Activated CD4-positive, alpha-beta memory T cell treated with anti-CD3 and anti-CD28 coated beads for 36 hours (primary cell): ENCODE measurements at regions of chr5 and their contacts with region 1.

Region 1: GRCh38 chr5:80654391-80655230 is at the starts of genes DHFR and MSH3:
- DNase-seq: peak; percentile 95
- H3K4me3 Mint-ChIP-seq: peak within 1 kb of the TSS; percentile 82
- H3K27ac Mint-ChIP-seq: peak within 1 kb of the TSS; percentile 93
- H3K4me1 Mint-ChIP-seq: peaks cover 20% of the 10 kb centered on the region
- H3K27me3 Mint-ChIP-seq: no peaks in the 10 kb centered on the region
- total RNA-seq, gene DHFR: 108 to 110 TPM
- total RNA-seq, gene MSH3: 23.2 to 23.6 TPM

Region 2: DNA sequence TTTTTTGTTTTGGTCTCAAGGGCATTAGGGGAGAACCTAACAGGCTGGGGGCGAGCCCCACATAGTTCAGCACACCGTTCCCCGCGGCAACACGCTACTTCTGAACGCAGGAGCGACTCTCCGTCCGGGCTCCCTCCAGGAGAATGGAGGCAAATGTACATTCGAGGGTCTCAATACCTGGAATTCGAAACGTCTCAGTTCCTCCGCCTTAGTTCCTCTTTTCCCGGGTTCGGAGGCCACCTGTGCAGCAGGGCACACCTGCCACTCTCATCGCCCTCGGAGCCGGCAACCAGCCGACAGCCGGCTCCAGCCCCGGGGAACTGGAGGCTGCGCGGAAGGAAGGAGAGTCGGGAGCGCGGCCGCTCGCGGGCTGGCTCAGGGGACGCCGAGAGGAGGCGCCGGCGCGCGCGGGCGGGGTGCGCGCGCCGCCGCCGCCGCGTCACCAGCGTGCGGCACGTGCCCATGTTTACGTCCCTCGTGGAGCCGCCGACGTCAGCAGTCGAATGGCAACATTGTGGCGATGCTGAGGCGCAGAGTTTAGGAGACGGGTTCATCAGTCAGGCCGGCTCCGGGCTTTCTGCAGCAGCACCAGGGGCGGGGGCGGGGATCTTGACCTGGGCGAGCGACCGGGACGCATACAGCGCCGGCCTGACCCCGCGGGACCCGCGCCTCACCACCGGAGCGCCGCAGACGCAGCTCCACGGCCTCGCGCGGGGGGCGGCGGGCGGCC is 1418.8 kb before region 1 on chr5 and contains the start of gene JMY:
- CTCF ChIA-PET with region 1: no interaction called
- POLR2A ChIA-PET with region 1: no interaction called
- intact Hi-C with region 1: loop called (anchors 10 kb)
- DNase-seq: peak; percentile 91
- H3K4me3 Mint-ChIP-seq: peak within 1 kb of the TSS; percentile 94
- H3K27ac Mint-ChIP-seq: peak within 1 kb of the TSS; percentile 98
- H3K4me1 Mint-ChIP-seq: peaks cover 15% of the 10 kb centered on the region
- H3K27me3 Mint-ChIP-seq: no peaks in the 10 kb centered on the region
- total RNA-seq, gene JMY: 8.6 to 9.1 TPM

Region 3: GRCh38 chr5:80407735-80408482 is 246.7 kb before region 1 on chr5 and contains the start of gene ZFYVE16:
- CTCF ChIA-PET with region 1: no interaction called
- POLR2A ChIA-PET with region 1: no interaction called
- intact Hi-C with region 1: loop called (anchors 1 kb)
- DNase-seq: peak; percentile 98
- H3K4me3 Mint-ChIP-seq: peak within 1 kb of the TSS; percentile 92
- H3K27ac Mint-ChIP-seq: peak within 1 kb of the TSS; percentile 97
- H3K4me1 Mint-ChIP-seq: peaks cover 16% of the 10 kb centered on the region
- H3K27me3 Mint-ChIP-seq: no peaks in the 10 kb centered on the region
- total RNA-seq, gene ZFYVE16: 12.1 to 15.7 TPM

Region 4: DNA sequence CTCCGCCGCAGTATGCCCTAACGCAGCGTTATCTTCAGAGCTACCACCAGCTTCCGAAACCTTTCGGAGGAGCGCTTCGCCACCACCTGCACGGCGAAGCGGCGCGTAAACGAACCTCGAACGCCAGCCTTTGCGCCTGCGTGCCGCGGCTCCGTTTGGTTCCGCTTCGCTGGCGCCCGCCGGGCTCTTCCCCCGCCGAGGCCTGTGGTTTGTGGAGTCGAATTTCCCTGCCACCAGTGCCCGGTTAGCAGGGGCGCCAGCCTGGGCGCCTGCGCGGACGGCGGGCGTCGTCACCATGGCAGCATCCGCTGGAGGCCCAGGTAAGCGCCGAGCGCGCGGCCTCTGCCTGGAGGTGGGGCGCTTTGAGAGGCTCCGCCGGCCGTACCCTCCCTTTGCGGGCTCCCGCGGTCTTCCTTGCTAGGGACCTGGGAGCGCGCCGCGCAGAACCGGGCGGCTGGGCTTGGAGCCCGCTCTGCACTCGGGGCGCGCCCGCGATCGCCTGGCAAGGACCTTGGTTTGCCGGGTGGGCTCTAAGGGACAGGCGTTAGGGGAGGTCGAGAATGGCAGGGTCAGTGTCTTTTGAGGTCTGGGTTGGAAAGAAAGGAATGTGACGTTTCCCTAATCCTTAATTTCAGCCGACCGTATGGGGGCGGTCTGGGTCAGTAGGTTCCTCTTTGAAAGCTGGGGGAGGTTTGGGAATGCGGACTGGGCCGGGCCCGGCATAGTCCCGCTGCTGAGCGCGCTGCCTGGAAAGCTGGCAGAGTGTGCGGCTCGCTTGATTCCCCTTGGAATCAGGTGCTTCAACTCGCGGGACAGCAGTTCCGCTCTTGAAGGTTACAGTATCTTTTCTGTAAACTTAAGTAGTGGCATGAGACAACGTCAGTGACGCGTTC is 166.5 kb before region 1 on chr5 and contains the start of gene FAM151B:
- CTCF ChIA-PET with region 1: no interaction called
- POLR2A ChIA-PET with region 1: no interaction called
- intact Hi-C with region 1: loop called (anchors 5 kb)
- DNase-seq: peak; percentile 85
- H3K4me3 Mint-ChIP-seq: peak within 1 kb of the TSS; percentile 72
- H3K27ac Mint-ChIP-seq: no peak within 1 kb of the TSS
- H3K4me1 Mint-ChIP-seq: peaks cover 11% of the 10 kb centered on the region
- H3K27me3 Mint-ChIP-seq: peaks cover 7% of the 10 kb centered on the region
- total RNA-seq, gene FAM151B: 0.24 to 0.27 TPM

Region 5: DNA sequence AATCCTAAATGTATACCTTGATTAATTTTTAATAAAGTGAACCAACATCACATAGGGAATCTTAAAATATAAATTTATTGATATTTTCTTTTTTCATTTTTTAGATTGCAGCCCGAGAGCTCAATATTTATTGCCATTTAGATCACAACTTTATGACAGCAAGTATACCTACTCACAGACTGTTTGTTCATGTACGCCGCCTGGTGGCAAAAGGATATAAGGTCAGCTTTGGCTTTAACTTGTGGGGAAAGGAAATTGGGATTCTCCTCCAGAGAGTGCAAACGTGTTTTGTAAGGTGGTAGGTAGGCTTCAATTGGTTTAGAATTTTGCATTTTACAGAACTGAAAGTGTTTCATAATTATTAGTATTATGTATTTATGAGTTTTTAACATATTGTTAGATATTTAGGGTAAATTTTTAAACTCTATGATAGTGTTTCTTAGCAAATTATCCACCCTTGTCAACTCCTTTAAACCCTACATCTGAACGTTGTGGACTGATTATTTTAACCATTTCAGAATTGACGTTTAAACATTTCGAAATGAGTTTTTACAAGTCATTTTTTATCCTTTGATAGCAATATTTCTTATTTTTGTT is 17.6 kb after region 1 on chr5:
- CTCF ChIA-PET with region 1: interaction called, 12 read pairs
- POLR2A ChIA-PET with region 1: no interaction called
- intact Hi-C with region 1: loop called (anchors 1 kb)
- DNase-seq: peak; percentile 78
- H3K4me3 Mint-ChIP-seq: no peak overlapping the region
- H3K27ac Mint-ChIP-seq: no peak overlapping the region
- H3K4me1 Mint-ChIP-seq: no peaks in the 10 kb centered on the region
- H3K27me3 Mint-ChIP-seq: no peaks in the 10 kb centered on the region